Activated naive CD4-positive, alpha-beta T cell treated with anti-CD3 and anti-CD28 coated beads for 36 hours (primary cell): ENCODE measurements at regions of chr2 and their contacts with region 1.

Region 1: DNA sequence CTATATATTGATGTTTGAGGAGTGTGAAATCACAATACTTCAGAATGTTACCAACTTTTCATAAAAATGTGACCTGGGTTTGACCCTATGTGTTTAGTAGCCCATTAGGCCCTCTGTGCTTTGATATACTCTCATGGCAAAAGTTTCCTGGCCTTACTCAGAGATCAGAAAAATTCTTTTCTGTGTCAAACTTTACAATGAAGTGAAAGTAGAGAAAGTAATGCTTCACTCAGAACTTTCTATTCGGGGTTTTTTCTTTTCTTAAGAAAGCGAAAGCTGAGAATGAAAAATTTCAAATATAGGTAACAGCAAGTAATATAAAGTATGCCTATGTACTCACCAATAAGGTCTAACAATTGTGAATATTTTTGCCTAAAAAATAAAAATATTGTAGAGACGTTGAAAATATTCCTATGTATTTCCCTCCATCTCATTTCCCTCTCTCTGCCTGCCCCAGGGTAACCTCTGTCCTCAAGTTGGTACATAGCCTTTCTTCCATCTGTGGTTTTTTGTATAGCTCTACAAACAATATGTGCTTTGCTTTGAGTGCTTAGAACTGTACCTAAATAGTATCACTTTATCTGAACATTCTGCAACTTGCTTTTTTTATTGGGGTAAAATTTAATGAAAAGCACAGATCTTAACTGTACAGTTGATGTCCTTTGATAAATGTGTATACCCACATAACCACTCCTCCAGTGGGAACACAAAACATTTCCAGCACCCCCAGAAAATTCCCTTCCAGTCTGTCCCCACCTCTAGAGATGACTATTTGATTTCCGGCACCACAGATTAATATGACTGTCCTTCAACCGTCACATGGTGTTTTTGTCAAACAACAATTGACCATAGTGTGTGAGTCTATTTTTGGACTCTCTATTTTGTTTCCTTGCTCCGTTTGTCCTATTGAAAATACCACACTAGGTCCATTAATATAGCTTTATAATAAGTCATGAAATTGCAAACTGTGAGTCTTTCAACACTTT is 10.3 kb upstream of the ACKR3 start:
- DNase-seq: no peak
- H3K4me3 Mint-ChIP-seq: peak overlapping the region; percentile 28
- H3K27ac Mint-ChIP-seq: no peak overlapping the region
- H3K4me1 Mint-ChIP-seq: peaks cover 52% of the 10 kb centered on the region
- H3K27me3 Mint-ChIP-seq: no peaks in the 10 kb centered on the region

Region 2: DNA sequence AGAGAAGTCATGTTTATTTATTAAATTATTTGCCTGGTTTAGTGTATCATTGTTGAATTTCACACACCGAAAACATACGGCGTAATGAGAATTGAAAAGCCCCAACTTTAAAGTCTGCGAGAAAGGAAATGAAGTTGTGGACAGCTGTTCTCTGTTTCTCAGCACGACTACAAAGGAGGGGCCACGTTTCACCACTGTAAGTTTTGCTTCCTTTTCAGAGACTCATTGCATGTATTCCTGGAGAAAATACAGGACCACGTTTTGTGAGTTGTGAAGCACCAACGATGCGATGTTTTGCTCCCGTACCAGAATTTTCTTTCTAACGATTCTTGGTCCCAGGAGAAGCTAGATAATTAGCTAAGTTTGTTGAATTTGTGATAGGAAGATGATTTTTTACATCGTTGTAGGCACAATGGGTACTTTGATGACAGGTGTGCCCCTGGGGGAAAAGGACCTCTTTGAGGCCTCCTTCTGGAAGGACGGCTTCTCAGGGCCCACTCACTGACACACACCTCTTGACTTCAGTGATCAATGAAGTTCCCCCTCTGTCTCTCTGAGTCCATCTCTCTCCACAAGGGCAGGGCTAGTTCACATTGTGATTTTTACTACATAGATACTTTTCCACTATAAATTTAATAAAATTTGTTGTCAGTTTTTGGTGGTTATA is 13.3 kb before region 1 on chr2:
- CTCF ChIA-PET with region 1: interaction called, 4 read pairs
- intact Hi-C with region 1: loop called (anchors 1 kb)
- DNase-seq: peak; percentile 70
- H3K4me3 Mint-ChIP-seq: peak overlapping the region; percentile 64
- H3K27ac Mint-ChIP-seq: peak overlapping the region; percentile 89
- H3K4me1 Mint-ChIP-seq: peaks cover 82% of the 10 kb centered on the region
- H3K27me3 Mint-ChIP-seq: no peaks in the 10 kb centered on the region

Region 3: GRCh38 chr2:236679884-236680860 is 120.9 kb after region 1 on chr2:
- CTCF ChIA-PET with region 1: no interaction called
- intact Hi-C with region 1: no loop called
- DNase-seq: no peak
- H3K4me3 Mint-ChIP-seq: no peak overlapping the region
- H3K27ac Mint-ChIP-seq: no peak overlapping the region
- H3K4me1 Mint-ChIP-seq: peaks cover 1% of the 10 kb centered on the region
- H3K27me3 Mint-ChIP-seq: peaks cover 14% of the 10 kb centered on the region